CD4-positive, alpha-beta T cell (primary cell): ENCODE measurements at regions of chr6 and their contacts with region 1.

Region 1: DNA sequence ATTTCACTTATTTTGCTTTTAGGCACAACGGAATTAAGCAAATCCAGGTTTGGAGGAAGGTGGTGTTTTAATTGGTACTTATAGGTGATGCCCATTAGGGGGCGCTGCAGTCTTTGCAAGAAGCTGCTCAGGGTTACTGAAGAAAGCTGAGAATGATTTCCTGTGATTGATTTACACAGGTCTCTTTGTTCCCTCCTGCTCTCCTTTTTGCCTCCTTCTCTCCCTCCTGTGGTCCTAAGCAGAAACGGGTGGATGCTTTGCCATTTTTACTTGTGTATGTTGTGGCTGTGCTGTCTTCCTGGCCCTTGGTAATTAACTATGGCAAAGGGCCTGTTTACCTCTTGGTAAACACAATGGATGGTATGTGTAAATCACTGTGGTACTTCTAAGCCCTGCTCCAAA is 97.8 kb downstream of the ANKS1A start:
- DNase-seq: peak; percentile 25 to 78 (median 51)
- ATAC-seq: peak; percentile 67
- H3K4me3 ChIP-seq: no peak overlapping the region
- H3K4me3 Mint-ChIP-seq: no peak overlapping the region
- H3K27ac ChIP-seq: no peak overlapping the region
- H3K27ac Mint-ChIP-seq: no peak overlapping the region
- H3K4me1 ChIP-seq: no peaks in the 10 kb centered on the region
- H3K4me1 Mint-ChIP-seq: no peaks in the 10 kb centered on the region
- H3K27me3 ChIP-seq: no peaks in the 10 kb centered on the region
- H3K27me3 Mint-ChIP-seq: no peaks in the 10 kb centered on the region
- CTCF ChIP-seq: peak; percentile 77

Region 2: DNA sequence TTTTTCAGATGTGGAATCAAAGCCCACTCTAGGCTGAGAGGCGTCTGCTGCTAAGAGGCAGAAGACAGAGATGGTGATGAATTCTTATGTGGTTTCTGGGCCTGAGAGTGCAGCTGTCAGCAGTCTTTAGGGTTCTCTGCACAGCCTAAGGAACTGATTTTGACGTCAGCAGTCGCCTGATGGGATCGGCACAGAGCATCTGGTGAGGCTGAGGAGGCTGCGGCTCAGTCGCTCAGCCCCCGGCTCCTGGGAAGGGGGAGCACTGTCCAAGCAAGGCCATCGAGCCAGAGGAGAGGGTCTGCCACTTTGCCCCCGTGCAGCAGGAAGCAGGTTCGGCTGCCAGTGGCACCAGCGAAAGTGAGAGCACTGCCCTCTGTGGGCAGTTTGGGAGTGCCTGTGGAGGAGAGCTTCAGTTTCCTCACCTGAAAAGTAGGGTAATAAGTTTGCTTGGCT is 61.8 kb after region 1 on chr6:
- CTCF ChIA-PET with region 1: no interaction called
- POLR2A ChIA-PET with region 1: no interaction called
- intact Hi-C with region 1: loop called in 1 of 2 experiments (anchors 1 kb)
- DNase-seq: peak in 13 of 14 experiments; percentile 3 to 54 (median 18)
- ATAC-seq: peak; percentile 86
- H3K4me3 ChIP-seq: peak overlapping the region; percentile 44
- H3K4me3 Mint-ChIP-seq: no peak overlapping the region
- H3K27ac ChIP-seq: no peak overlapping the region
- H3K27ac Mint-ChIP-seq: no peak overlapping the region
- H3K4me1 ChIP-seq: peaks cover 14% of the 10 kb centered on the region
- H3K4me1 Mint-ChIP-seq: no peaks in the 10 kb centered on the region
- H3K27me3 ChIP-seq: no peaks in the 10 kb centered on the region
- H3K27me3 Mint-ChIP-seq: no peaks in the 10 kb centered on the region
- CTCF ChIP-seq: peak; percentile 26

Region 3: DNA sequence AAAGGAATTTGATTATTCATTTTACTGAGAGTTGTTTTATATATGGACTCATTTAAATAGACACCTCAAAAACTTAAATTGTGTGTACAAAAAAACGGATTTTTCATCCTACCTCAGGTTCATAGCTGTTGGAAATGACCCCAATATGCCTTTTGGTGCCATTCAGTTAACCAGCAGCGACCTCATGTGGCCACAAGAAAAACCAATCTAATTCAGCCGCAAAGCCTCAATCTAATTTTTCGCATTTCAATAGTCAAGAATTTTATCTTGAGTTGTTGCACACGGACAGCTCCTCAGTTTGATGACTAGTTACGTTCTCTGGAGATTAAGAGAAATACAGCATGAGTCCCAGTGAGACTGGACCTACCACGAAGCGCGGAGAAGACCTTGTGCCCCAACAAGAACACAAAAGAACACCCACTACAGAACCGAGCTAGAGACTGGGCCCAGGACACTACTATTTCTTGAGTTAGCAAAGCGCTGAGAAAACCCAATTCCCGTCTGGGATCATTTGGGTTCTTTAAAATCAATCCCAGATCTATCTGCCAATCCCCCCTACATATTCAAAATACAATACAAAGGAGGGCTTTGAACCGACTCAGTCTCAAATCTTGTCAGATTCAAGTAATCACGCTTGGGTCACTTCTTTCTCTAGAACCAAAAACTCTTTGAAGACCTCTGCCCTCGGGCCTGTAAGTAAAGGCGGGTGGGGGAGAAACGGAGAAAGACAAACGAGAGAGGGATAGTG is 153.2 kb after region 1 on chr6:
- CTCF ChIA-PET with region 1: interaction called, 12 read pairs
- POLR2A ChIA-PET with region 1: interaction called, 5 read pairs
- intact Hi-C with region 1: loop called (anchors 1 kb)
- DNase-seq: peak; percentile 8 to 80 (median 26)
- ATAC-seq: no peak
- H3K4me3 ChIP-seq: no peak overlapping the region
- H3K4me3 Mint-ChIP-seq: peak overlapping the region; percentile 32
- H3K27ac ChIP-seq: no peak overlapping the region
- H3K27ac Mint-ChIP-seq: no peak overlapping the region
- H3K4me1 ChIP-seq: peaks cover 16% of the 10 kb centered on the region
- H3K4me1 Mint-ChIP-seq: peaks cover 11% of the 10 kb centered on the region
- H3K27me3 ChIP-seq: peaks cover 11% of the 10 kb centered on the region in 2 experiments
- H3K27me3 Mint-ChIP-seq: peaks cover 21% of the 10 kb centered on the region
- CTCF ChIP-seq: peak; percentile 85

Region 4: DNA sequence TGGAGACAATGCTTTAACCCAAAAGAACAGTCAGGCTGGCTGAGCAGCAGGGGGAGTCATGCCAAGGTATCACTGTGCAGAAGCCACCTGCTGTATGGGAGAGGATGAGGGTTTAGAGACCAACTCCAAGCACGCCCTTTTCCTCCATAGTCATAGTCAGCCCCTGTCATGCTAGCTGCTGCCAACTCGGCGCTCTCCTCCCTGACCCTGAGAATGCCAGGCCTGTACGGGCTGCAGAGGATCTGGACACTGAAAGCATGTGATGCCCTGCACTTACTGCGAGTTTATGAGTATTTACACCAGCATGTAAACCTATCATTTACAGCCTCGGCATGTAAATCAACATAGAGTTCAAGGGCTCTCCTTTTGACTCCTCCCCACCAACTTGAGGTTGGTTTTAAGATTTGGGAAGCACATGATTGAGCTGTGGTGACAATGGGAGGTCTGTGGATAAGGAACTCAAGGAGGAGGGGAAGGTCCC is 215.3 kb after region 1 on chr6:
- CTCF ChIA-PET with region 1: no interaction called
- POLR2A ChIA-PET with region 1: interaction called, 5 read pairs
- intact Hi-C with region 1: loop called (anchors 2 to 10 kb)
- DNase-seq: no peak
- ATAC-seq: no peak
- H3K4me3 ChIP-seq: no peak overlapping the region
- H3K4me3 Mint-ChIP-seq: no peak overlapping the region
- H3K27ac ChIP-seq: no peak overlapping the region
- H3K27ac Mint-ChIP-seq: no peak overlapping the region
- H3K4me1 ChIP-seq: no peaks in the 10 kb centered on the region
- H3K4me1 Mint-ChIP-seq: no peaks in the 10 kb centered on the region
- H3K27me3 ChIP-seq: peaks cover 26 to 29% of the 10 kb centered on the region in 2 experiments
- H3K27me3 Mint-ChIP-seq: peaks cover 66% of the 10 kb centered on the region
- CTCF ChIP-seq: no peak

Region 5: DNA sequence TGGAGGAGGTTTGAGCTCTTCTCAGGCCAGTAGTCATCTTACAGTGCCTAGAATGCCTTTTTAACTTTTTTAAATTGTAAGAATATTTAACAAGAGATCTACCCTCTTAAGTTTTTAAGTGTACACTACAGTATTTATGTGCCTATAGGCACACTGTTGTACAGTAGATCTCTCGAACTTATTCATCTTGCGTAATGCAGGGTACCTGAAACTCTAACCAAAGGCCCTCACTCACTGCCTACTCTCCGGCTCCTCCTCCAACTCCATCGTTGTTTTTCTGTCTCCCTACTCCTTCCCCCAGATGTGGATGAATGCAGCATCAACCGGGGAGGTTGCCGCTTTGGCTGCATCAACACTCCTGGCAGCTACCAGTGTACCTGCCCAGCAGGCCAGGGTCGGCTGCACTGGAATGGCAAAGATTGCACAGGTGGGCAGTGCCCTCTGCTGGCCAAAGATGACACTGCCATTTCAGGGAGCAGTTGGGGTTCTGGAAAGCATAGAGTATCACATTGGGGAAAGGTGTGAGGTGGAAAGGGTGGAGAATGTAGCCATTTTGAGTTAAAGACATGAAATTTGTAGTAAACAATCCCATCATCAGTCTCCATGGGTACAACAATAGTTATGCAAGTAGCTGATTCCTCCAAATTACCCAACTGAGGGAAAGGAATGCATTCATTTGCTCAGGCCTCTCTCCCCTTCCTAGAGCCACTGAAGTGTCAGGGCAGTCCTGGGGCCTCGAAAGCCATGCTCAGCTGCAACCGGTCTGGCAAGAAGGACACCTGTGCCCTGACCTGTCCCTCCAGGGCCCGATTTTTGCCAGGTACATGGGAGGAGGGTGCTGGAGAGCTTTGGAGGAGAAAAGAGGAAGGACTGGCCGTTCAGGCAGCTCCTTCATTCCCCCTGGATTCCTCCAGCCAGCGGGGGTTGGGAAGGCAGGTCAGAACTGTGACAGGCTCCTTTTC is 254.3 kb after region 1 on chr6:
- CTCF ChIA-PET with region 1: no interaction called
- POLR2A ChIA-PET with region 1: no interaction called
- intact Hi-C with region 1: loop called (anchors 1 to 2 kb)
- DNase-seq: peak; percentile 58 to 81 (median 70)
- ATAC-seq: peak; percentile 93
- H3K4me3 ChIP-seq: no peak overlapping the region
- H3K4me3 Mint-ChIP-seq: no peak overlapping the region
- H3K27ac ChIP-seq: no peak overlapping the region
- H3K27ac Mint-ChIP-seq: no peak overlapping the region
- H3K4me1 ChIP-seq: peaks cover 6% of the 10 kb centered on the region
- H3K4me1 Mint-ChIP-seq: peaks cover 4% of the 10 kb centered on the region
- H3K27me3 ChIP-seq: no peaks in the 10 kb centered on the region
- H3K27me3 Mint-ChIP-seq: no peaks in the 10 kb centered on the region
- CTCF ChIP-seq: peak; percentile 94